ENCODE measurements at regions of chr1 and their contacts with region 1.

Region 1: DNA sequence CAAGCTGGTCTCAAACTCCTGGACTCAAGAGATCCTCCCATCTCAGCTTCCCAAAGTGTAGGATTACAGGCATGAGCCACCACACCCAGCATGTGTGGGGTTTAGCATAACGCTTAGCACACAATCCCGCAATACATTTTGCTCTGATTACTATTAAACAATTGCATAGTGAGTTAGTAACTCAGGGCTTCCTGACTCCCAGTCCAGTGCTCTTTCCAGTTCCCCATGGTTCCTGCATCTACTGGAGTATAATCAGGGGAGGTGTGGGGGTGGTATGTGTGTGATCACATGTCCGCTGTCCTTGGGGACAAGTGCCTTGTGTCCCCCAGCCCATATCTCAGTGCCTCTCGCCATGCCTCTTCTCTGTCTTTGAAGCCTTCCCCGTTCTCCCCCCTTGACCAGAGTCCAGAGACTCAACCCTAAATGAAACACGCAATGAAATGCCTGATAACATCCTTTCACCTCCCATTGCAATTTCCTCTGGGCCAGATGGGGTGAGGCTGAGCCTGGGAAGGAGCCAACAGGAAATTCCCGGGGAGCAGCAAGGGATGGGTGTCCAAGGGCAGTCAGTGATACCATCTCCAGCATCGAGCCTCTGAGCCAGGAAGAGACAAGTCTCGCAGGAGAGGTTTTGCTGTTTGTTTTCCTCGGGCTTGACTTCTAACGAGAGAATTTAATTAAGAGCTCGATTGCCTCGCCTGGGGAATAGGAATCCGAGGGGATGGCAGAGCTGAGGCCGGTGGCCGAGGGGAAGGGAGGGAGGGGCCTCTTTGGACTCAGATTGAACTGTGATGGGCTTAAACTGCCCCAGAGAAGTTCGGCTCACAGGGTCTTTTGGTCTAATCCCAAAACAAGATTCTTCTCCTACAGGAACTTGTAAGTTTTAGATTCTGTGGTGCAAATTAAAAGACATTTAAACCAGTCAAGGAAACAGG is 7.7 kb upstream of the HTR1D start:
- DNase-seq: peak in 1 of 4 experiments; percentile 13
- ATAC-seq: no peak
- H3K4me3 ChIP-seq: no peak overlapping the region
- H3K27ac ChIP-seq: no peak overlapping the region
- H3K4me1 ChIP-seq: no peaks in the 10 kb centered on the region
- H3K27me3 ChIP-seq: peaks cover 24 to 28% of the 10 kb centered on the region in 2 experiments
- CTCF ChIP-seq: no peak
- EP300 ChIP-seq: no peak
- POLR2A ChIP-seq: no peak
- RAD21 ChIP-seq: no peak

Region 2: DNA sequence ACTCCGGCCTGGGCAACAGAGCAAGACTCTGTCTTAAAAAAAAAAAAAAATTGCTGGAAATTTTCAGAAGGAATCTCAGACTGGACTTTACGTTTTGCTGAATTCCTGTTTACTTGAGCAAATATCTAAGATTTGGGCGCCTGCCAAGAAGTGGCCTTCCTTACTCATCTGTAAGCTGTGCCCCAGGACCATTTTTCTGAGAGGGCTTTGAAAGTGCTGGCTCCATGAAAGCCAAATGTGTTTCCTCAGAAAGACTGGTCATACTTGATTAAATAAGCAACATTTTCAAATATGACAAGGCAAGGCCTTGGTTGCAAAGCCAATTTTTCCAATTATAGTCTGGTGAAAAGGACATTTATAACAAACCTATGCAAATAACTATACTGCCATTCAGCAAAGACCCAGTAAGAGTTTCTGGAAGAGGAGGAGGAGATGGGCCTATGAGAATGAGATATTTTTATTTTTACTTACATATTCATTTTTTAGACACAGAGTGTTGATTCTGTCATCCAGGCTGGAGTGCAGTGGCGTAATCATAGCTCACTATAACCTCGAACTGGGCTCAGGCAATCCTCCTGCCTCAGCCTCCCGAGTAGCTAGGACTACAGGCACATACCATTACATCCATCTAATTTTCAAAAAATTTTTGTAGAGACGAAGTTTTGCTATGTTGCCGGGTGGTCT is 48.6 kb after region 1 on chr1:
- CTCF ChIA-PET with region 1: no interaction called
- POLR2A ChIA-PET with region 1: interaction called, 3 read pairs
- in situ Hi-C with region 1: no loop called
- intact Hi-C with region 1: loop called (anchors 5 kb)
- DNase-seq: peak in 2 of 4 experiments; percentile 22 to 49
- ATAC-seq: no peak
- H3K4me3 ChIP-seq: no peak overlapping the region
- H3K27ac ChIP-seq: no peak overlapping the region
- H3K4me1 ChIP-seq: peaks cover 0 to 6% of the 10 kb centered on the region in 2 experiments; a peak in 3 of 5 replicates
- H3K27me3 ChIP-seq: no peaks in the 10 kb centered on the region
- CTCF ChIP-seq: no peak
- EP300 ChIP-seq: no peak
- POLR2A ChIP-seq: no peak
- RAD21 ChIP-seq: no peak

Measured in K562 (cell line).